GM23248 (cell line): ENCODE measurements at regions of chr17 and their contacts with region 1.

Region 1: DNA sequence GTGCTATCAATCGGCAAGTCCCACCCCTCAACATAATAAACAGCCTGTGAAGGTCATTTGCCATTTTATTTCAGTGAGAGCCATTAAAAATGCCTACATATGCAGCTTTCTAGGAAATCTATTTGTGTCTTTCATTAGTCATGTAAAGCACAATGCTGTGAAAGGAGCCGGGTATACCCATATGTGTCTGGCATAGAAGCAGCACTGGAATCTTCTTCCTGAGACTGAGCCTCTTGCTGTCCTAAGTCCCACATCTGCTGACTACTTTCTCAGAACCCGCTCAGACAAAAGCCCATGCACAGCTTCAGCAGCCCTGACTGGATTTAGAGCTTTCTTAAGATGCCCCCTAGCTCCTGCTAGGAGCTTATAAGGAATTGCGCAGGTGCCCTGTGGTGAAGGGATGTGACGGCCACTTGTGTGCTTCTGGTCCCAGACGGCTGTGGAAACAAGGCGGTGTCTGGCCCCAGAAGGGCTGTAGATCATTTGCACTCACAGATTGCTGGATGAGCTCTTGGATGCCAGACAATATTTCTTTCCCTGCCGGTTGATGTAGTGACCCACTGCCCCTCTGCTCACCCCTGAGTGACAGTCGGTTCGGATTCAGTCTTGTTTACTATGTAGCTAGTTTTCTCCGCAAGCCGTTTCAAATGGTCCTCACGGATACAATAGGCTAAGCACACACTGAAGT is 172.2 kb downstream of the ANKFN1 start:
- DNase-seq: peak; percentile 22
- H3K4me3 ChIP-seq: no peak overlapping the region
- H3K27ac ChIP-seq: no peak overlapping the region
- H3K4me1 ChIP-seq: 0 out of 2 replicates have a peak, but pooled peaks cover 5% of the 10 kb centered on the region
- H3K27me3 ChIP-seq: no peaks in the 10 kb centered on the region; the same call in 1 of the 2 replicates

Region 2: GRCh38 chr17:55845385-55845784 is 480.1 kb before region 1 on chr17:
- in situ Hi-C with region 1: loop called (anchors 25 kb)
- DNase-seq: peak; percentile 81
- H3K4me3 ChIP-seq: peak overlapping the region; percentile 63
- H3K27ac ChIP-seq: no peak overlapping the region
- H3K4me1 ChIP-seq: peaks cover 7% of the 10 kb centered on the region
- H3K27me3 ChIP-seq: 0 out of 2 replicates have a peak, but pooled peaks cover 3% of the 10 kb centered on the region